Dendritic cell treated with granulocyte-macrophage colony-stimulating factor and Interleukin-4, amounts not matched to agents 40 ng/mL and 50 ng/mL, for 4 days (primary cell): ENCODE measurements at regions of chr7 and their contacts with region 1.

Region 1: GRCh38 chr7:132580717-132581285 is 4.5 kb upstream of the PLXNA4 start:
- H3K4me3 Mint-ChIP-seq: no peak overlapping the region
- H3K27ac Mint-ChIP-seq: no peak overlapping the region
- H3K4me1 Mint-ChIP-seq: peaks cover 4% of the 10 kb centered on the region
- H3K27me3 Mint-ChIP-seq: peaks cover 41% of the 10 kb centered on the region

Region 2: GRCh38 chr7:131945313-131945911 is 635.4 kb before region 1 on chr7:
- intact Hi-C with region 1: loop called (anchors 5 kb)
- H3K4me3 Mint-ChIP-seq: no peak overlapping the region
- H3K27ac Mint-ChIP-seq: no peak overlapping the region
- H3K4me1 Mint-ChIP-seq: no peaks in the 10 kb centered on the region
- H3K27me3 Mint-ChIP-seq: peaks cover 33% of the 10 kb centered on the region

Region 3: GRCh38 chr7:132049462-132050304 is 531.1 kb before region 1 on chr7:
- intact Hi-C with region 1: no loop called
- H3K4me3 Mint-ChIP-seq: no peak overlapping the region
- H3K27ac Mint-ChIP-seq: no peak overlapping the region
- H3K4me1 Mint-ChIP-seq: no peaks in the 10 kb centered on the region
- H3K27me3 Mint-ChIP-seq: peaks cover 5% of the 10 kb centered on the region

Region 4: DNA sequence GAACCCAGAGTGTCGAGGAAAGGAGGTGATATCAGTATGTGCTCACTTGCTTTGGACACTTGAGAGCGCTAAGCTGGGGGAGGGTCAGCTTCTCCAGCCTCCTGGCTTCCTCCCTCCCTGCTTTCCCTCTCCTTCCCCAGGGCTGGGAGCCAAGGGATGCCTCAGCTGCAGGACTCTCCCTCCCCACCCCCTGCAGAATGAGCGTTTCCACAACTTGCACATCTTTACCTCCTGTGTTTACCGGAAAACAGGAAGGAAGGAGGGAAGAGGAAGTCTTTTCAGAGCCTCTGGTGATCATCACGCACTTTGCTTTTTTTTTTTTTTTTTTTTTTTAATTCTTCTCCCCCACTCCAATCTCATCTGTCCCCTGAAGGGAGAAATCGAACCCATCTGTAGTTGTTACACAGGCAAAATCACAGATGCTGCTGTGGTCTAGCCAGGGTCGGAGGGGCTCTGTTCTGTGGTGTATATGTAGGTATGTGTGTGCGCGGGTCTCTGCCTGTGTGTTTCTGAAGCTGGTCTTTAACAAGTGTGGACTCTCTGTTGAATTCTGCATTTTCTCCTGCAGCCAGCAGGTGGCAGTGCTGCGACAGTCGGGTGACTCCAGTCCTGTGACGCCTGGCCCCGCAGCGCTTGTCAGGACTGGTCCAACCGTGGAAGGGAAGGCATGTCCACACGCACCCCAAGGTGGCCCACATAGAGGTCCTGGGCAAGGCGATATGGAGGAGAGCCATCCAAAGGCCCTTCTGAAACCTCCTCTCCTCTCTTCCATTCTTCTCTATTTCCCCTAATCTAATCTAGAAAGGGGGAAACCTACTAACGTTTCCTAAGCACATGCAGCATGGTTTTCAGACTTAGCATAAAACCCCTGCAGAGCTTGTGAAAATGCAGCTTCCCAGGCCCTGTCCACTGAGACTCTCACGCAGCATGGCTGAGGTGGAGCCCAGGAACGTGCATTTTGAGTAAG is 262.2 kb before region 1 on chr7:
- intact Hi-C with region 1: loop called (anchors 1 kb)
- H3K4me3 Mint-ChIP-seq: no peak overlapping the region
- H3K27ac Mint-ChIP-seq: no peak overlapping the region
- H3K4me1 Mint-ChIP-seq: peaks cover 10% of the 10 kb centered on the region
- H3K27me3 Mint-ChIP-seq: peaks cover 37% of the 10 kb centered on the region

Region 5: DNA sequence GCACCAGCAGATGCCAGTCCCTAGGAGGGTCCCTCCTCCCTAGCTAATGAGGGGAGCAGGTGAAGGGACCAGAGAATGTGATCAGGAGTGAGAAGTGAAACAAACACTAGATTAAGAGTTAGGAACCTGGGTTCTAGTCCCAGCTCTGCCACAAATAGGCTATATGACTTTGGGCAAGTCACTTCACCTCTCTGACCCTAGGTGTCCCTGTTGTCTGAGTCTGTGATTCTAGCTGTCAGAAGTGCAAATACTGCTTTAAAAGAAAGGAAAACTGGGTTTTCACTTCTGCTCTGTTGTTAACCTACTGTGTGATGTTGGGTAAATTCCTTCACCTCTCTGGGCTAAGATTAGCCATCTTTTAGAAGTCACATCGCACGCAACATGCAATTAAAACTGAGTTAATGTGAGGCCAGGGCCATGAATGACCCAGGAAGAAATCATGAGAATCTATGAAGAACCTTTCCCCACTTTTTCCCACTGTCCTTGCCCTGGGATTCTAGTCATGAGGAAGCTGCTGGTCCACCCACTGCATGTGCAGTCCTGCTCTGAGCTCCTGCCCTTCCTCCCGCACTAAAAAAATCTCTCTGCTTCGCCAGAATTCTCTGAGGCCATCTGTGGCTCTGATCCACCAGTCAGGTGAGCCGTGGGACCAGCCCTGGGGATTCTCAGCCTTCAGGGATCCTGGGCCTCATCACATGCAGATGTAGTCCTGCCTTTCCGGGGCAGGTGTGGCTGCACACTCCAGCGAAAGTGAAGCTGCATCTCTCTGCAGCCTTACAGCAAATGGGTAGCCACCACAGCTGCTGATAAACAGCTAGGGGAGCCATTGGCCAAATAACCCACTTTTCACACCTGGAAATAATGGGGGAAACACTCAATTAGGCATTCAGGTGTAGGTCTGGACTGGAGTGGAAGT is 186.3 kb before region 1 on chr7:
- intact Hi-C with region 1: loop called (anchors 1 kb)
- H3K4me3 Mint-ChIP-seq: no peak overlapping the region
- H3K27ac Mint-ChIP-seq: no peak overlapping the region
- H3K4me1 Mint-ChIP-seq: peaks cover 28% of the 10 kb centered on the region
- H3K27me3 Mint-ChIP-seq: peaks cover 34% of the 10 kb centered on the region

Region 6: GRCh38 chr7:133315332-133316040 is 734.7 kb after region 1 on chr7:
- intact Hi-C with region 1: no loop called
- H3K4me3 Mint-ChIP-seq: no peak overlapping the region
- H3K27ac Mint-ChIP-seq: no peak overlapping the region
- H3K4me1 Mint-ChIP-seq: peaks cover 6% of the 10 kb centered on the region
- H3K27me3 Mint-ChIP-seq: no peaks in the 10 kb centered on the region